IMR-90 (cell line): ENCODE measurements at regions of chr13 and their contacts with region 1.

Region 1: DNA sequence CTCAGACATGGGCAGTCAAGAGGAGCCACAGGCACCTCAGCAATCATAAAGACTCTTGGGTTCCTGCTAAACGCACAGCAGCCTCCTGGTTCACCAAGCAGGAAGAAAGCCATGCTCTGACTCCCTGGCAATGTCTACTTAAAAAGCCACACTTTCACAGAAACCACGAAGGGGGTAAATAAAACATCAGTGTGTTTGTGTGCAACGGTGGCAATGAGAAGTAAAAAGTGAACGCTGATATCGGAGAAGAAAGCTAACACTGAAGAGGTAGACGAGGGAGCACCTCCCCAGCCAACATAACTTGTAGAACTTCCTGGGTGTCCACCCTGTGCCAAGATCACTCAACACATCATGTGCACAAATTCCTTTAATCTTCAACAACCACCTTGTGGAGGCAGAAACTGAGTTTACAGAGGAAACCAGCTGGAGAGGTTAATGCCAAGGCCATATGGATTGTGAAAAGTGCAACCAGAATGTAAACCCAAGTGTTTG is 30.2 kb downstream of the HSPH1 start:
- DNase-seq: no peak
- ATAC-seq: peak; percentile 24; the same call in 1 of the 2 replicates
- H3K4me3 ChIP-seq: no peak overlapping the region
- H3K27ac ChIP-seq: no peak overlapping the region
- H3K4me1 ChIP-seq: peaks cover 2% of the 10 kb centered on the region; the same call in 1 of the 2 replicates
- H3K27me3 ChIP-seq: peaks cover 23% of the 10 kb centered on the region
- CTCF ChIP-seq: no peak
- POLR2A ChIP-seq: no peak
- RAD21 ChIP-seq: no peak

Region 2: DNA sequence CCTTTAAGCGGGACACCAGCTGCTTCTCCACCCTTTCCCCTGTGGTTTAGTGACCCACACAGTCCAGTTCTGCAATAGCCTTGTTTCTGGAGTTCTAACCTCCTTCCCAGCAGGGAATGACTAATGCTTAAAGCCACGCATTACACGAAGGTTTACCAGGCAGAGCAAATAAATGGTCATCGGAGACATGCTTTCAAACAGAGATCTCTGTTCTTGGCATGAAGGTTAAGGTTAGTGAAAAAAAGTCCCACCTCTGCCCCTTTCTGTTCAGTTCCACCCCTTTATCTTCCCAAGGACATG is 250.7 kb before region 1 on chr13:
- CTCF ChIA-PET with region 1: no interaction called
- POLR2A ChIA-PET with region 1: interaction called, 4 read pairs
- dilution Hi-C with region 1: no loop called
- in situ Hi-C with region 1: no loop called
- intact Hi-C with region 1: loop called (anchors 10 kb)
- DNase-seq: peak; percentile 97
- ATAC-seq: peak; percentile 89
- H3K4me3 ChIP-seq: no peak overlapping the region
- H3K27ac ChIP-seq: peak overlapping the region; percentile 88
- H3K4me1 ChIP-seq: peaks cover 27% of the 10 kb centered on the region
- H3K27me3 ChIP-seq: no peaks in the 10 kb centered on the region
- CTCF ChIP-seq: 0 out of 2 replicates have a peak, but pooled peaks have one; percentile 23
- POLR2A ChIP-seq: no peak; the same call in 1 of the 2 replicates
- RAD21 ChIP-seq: peak; percentile 48